Naive thymus-derived CD8-positive, alpha-beta T cell (primary cell): ENCODE measurements at regions of chr16 and their contacts with region 1.

Region 1: DNA sequence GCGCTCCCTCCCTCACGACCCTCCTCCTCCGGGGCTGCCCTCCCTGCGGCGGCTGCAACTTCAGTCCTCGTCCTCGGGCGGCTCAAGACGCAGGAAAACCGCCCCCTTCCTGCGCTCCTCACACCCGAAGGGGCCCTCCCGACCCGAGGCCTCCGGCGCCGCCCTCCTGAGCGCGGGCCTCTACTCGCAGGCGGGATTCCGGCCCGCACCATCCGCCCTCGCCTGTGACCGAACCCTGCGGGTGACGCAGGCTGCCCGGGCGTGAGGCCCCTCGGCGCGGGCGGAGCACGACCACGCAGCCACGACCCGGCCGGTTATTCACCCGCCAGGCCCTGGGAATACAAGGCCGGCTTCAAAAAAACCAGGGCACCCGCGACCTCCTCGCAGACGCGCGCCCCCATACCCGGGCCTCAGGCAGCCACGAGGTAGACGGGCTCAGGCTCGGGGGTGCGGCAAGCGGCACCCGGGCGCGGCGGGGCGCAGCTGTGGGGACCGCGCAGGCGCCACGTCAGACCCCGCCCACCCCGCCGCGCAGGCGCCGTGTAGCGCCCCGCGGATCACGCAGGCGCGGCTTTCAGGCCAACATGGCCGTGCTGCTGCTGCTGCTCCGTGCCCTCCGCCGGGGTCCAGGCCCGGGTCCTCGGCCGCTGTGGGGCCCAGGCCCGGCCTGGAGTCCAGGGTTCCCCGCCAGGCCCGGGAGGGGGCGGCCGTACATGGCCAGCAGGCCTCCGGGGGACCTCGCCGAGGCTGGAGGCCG is at the start of gene SPG7:
- DNase-seq: peak; percentile 84 to 95 (median 92)
- ATAC-seq: peak; percentile 75 to 76
- H3K4me3 Mint-ChIP-seq: peak within 1 kb of the TSS; percentile 80 to 97 (median 94)
- H3K27ac Mint-ChIP-seq: peak within 1 kb of the TSS; percentile 63 to 99 (median 96)
- H3K4me1 Mint-ChIP-seq: peaks cover 11 to 55% (median 31%) of the 10 kb centered on the region in 4 donors
- H3K27me3 Mint-ChIP-seq: peaks cover 0 to 1% (median 0%) of the 10 kb centered on the region in 5 donors
- polyA plus RNA-seq, gene SPG7: 44.8 to 58.2 (median 44.9) TPM

Region 2: DNA sequence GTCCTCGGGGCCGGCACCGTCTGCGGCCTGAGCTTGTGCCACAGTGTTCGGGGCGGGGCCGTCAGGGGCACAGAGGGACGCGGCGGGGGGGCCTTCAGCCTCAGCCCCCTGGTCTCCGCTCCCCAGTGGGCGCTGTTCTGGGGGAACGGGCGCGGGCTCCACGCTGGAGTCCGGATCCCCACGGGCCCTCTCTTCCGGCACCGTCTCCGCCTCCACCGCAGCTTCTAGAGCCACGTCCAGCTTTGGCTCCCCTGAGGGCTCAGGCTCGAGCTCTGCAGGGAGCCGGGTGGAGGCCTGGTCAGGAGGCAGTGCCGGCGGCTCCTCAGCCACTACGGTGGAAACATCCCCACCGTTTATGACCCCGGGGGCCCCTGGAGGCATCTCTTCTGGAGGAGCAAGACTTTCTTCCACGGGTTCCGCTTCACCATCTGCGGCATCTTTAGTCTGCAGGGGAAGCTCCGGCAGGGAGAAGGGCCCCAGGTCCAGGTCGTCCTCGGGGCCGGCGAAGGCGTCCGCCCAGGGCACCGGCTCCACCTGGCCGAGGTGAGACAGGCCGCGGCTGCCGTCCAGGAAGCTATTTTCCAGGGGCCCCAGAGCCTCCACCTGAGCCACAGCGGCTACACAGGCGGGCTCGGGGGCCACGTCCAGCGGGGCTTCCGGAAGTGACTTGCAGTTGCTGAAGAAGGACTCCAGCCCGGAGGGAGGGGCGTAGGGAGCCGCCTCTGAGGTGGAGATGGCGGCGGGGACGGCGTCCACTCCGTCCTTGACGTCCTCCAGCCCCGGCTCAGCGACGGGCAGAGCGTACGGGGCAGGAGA is 228.1 kb before region 1 on chr16:
- POLR2A ChIA-PET with region 1: no interaction called
- DNase-seq: no peak
- ATAC-seq: no peak
- H3K4me3 Mint-ChIP-seq: no peak overlapping the region
- H3K27ac Mint-ChIP-seq: peak overlapping the region in 1 of 10 donors; percentile 40
- H3K4me1 Mint-ChIP-seq: peaks cover 0 to 5% (median 0%) of the 10 kb centered on the region in 4 donors
- H3K27me3 Mint-ChIP-seq: no peaks in the 10 kb centered on the region

Region 3: DNA sequence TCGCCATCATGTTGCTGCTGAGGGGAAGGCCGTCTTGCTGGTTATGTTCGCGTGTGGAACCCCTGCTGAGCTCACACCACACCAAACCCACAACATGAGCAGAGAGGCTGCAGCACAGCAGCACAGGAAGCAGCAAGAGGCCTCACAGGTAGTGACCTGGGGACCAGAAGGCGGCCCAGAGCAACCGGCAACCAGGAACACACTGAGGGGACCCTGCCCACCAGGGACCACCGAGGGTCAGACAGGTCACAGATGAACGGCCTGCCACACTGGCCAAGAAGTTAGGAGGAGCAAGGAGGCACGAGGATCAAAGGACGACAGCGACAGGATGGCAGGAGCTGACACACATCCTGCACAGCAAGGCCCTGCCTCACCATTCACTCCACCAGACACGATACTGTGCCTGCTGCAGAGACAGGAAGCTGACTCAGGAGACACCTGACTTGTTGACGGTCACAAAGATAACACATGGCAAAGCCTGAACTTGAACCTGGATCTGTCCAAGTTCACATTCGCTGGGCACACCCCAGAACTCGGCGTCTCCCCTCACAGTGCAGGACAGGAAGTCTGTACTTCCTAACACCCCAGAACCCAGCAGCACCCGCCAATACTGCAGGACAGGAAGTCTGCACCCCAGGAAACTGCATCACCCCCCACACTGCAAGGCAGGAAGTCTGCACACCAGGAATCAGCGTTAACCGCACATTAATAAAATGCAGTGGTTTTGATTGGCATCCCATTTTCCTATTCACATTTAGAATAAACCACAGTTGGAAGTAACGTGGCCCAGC is 192.0 kb before region 1 on chr16:
- POLR2A ChIA-PET with region 1: interaction called, 17 read pairs
- DNase-seq: peak; percentile 42 to 87 (median 74)
- ATAC-seq: peak; percentile 86
- H3K4me3 Mint-ChIP-seq: peak overlapping the region; percentile 70 to 90 (median 84)
- H3K27ac Mint-ChIP-seq: peak overlapping the region; percentile 93 to 99 (median 98)
- H3K4me1 Mint-ChIP-seq: peaks cover 49 to 99% (median 95%) of the 10 kb centered on the region in 4 donors
- H3K27me3 Mint-ChIP-seq: no peaks in the 10 kb centered on the region

Region 4: GRCh38 chr16:89484923-89485679 is 22.9 kb before region 1 on chr16:
- POLR2A ChIA-PET with region 1: interaction called, 74 read pairs
- DNase-seq: peak in 4 of 10 donors; percentile 25 to 60 (median 46)
- ATAC-seq: peak in 1 of 2 donors; percentile 15
- H3K4me3 Mint-ChIP-seq: peak overlapping the region; percentile 73 to 94 (median 89)
- H3K27ac Mint-ChIP-seq: peak overlapping the region; percentile 87 to 99 (median 96)
- H3K4me1 Mint-ChIP-seq: peaks cover 60 to 90% (median 87%) of the 10 kb centered on the region in 4 donors
- H3K27me3 Mint-ChIP-seq: no peaks in the 10 kb centered on the region

Region 5: DNA sequence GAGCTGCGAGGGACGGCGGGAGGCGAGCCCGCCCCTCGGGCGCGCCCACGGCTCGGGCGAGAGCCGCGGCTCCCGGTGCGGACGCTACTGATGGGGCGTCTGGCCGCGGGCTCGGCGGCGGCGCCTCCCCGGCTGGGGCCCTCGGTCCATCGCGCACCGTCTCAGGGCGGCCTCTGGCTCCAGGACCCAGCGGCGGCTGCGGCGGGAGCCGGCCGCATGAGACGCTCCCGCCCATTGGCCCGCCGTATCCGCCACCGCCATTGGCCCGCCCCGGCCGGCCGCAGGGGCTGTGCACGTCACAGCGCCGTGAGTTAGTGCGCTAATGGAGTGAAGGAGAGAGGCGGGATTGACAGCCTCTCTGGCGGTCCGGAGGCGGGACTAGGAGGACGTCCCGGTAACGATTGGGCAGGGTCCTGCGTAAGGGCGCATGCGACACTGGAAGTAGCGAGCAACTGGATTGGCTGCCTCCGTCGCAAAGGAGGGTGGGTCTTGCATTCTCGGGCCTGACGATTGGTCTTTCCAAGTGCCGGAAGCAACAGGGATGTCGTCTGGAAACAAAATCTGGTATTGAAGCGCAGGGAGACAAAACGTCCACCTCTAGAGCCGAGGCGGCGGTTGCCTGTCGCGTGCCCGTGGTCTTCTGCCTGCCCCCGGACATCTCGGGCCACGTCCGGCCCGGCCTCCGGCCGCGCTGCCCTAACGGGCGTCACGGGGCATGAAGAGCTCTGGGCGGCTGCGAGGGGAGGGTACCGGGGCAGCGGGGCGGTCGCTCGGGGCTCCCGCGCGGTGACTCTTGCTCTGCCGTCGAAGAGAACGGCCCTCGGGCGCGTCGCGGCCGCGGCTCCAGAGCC is 17.4 kb before region 1 on chr16 and contains the start of gene ANKRD11:
- POLR2A ChIA-PET with region 1: interaction called, 74 read pairs
- DNase-seq: peak; percentile 92 to 100 (median 98)
- ATAC-seq: peak; percentile 82 to 86
- H3K4me3 Mint-ChIP-seq: peak within 1 kb of the TSS; percentile 92 to 97 (median 94)
- H3K27ac Mint-ChIP-seq: peak within 1 kb of the TSS; percentile 94 to 99 (median 97)
- H3K4me1 Mint-ChIP-seq: peaks cover 30 to 67% (median 63%) of the 10 kb centered on the region in 4 donors
- H3K27me3 Mint-ChIP-seq: no peaks in the 10 kb centered on the region
- polyA plus RNA-seq, gene ANKRD11: 8.9 to 61.1 (median 13.9) TPM

Region 6: DNA sequence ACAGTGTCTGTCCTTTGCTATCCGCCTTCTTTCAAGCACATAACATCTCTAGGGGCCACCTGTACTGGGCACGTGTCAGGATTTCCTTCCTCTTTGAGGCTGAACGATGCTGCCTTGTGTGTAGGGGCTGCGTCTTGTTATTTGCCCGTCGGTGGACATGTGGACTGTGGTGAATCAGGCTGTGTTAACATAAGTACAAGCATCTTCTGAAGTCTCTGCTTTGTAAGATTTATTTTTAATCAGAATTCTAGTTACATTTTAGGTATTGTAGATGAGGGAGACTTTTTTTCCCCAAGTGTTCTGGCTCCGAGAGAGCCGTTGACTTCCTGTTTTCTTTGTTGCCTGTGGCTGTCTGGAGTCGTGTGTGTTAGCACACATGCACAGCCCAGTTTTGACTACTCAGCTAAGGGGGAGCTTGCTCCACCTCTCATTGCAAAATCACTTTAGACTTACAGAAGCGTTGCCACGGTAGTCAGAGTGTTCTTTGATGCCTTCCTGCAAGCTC is 26.3 kb after region 1 on chr16:
- POLR2A ChIA-PET with region 1: interaction called, 17 read pairs
- DNase-seq: peak in 9 of 10 donors; percentile 36 to 81 (median 56)
- ATAC-seq: peak; percentile 93 to 96
- H3K4me3 Mint-ChIP-seq: peak overlapping the region; percentile 36 to 80 (median 70)
- H3K27ac Mint-ChIP-seq: peak overlapping the region; percentile 84 to 98 (median 94)
- H3K4me1 Mint-ChIP-seq: peaks cover 7 to 23% (median 22%) of the 10 kb centered on the region in 4 donors
- H3K27me3 Mint-ChIP-seq: no peaks in the 10 kb centered on the region

Region 7: DNA sequence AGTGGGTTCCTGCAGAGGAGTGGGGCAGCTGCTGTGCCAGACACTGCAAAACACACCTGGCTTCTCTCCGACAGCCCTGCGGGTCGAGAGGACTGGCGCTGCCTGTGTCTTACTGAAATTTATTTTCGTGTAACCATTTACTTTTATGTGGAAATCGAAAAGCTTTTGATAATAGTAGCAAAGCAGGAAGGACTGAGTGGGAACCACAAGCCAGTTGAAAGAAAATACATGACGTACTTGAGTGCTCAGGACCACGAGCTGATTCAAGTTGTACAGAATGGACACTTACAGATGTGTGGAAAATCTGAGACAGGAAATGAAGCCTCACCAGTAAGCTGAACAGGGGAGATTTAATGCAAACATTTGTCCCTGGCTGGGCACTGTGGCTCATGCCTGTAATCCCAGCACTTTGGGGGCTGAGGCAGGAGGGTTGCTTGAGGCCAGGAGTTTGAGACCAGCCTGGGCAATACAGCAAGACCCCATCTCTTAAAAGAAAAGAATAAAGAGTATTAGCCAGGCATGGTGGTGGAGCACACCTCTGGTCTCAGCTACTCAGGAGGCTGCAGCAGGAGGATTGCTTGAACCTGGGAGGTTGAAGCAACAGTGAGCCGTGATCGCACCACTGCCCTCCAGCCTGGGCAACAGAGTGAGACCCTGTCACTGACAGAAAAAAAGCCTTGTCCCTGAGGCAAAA is 41.1 kb after region 1 on chr16:
- POLR2A ChIA-PET with region 1: interaction called, 13 read pairs
- DNase-seq: peak in 7 of 10 donors; percentile 24 to 82 (median 61)
- ATAC-seq: peak; percentile 90 to 94
- H3K4me3 Mint-ChIP-seq: peak overlapping the region; percentile 33 to 91 (median 78)
- H3K27ac Mint-ChIP-seq: peak overlapping the region; percentile 86 to 99 (median 96)
- H3K4me1 Mint-ChIP-seq: peaks cover 9 to 35% (median 24%) of the 10 kb centered on the region in 4 donors
- H3K27me3 Mint-ChIP-seq: no peaks in the 10 kb centered on the region